Activated B cell treated with CpG ODN at 0.5 μM for 24 hours (primary cell): ENCODE measurements at regions of chr15 and their contacts with region 1.

Region 1: DNA sequence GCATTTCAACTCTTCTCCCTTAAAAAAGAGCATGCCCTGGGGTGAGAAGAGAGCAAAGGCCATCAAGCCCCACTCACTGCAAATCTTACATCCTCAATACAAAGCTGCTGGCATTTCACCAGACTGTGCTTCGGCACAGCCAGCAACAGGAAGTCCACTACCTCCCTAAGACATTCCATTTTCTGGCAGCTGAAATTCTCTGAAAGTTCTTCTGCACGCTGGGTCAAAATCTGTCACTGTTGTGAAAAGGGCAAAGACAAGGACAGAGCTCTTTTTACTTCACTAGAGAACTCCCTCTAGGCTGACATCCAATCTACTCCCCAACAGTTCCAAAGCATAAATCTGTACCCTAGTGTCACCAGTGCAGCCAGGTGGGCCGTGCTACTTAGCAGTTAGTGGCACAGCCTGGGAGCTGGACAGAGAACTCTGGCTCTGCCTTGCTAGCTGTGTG is 6.3 kb downstream of the MTMR10 start:
- DNase-seq: no peak
- ATAC-seq: peak; percentile 34
- H3K4me3 Mint-ChIP-seq: peak overlapping the region; percentile 59
- H3K27ac Mint-ChIP-seq: peak overlapping the region; percentile 83
- H3K4me1 Mint-ChIP-seq: peaks cover 75% of the 10 kb centered on the region
- H3K27me3 Mint-ChIP-seq: no peaks in the 10 kb centered on the region
- CTCF ChIP-seq: no peak

Region 2: DNA sequence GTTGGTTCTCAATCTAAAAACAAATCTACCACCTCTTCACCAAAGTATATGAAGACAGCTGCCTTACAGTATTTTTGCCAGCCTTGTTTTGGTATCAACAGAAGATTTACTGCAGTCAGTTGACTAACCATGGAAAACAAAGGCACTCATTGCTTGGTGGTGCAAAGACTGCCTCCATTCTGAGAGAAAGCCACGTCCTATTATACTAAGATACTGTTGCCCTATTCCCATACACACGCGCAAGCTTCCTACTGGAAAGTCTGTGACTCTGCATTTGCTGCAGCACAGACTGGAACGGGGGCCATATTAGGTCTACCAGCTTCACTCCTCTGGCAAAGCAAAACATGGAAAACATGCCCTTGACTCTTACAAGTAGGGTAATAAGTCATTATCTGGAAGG is 11.7 kb before region 1 on chr15:
- CTCF ChIA-PET with region 1: interaction called, 4 read pairs
- POLR2A ChIA-PET with region 1: interaction called, 6 read pairs
- intact Hi-C with region 1: loop called (anchors 2 kb)
- DNase-seq: no peak
- ATAC-seq: no peak
- H3K4me3 Mint-ChIP-seq: no peak overlapping the region
- H3K27ac Mint-ChIP-seq: no peak overlapping the region
- H3K4me1 Mint-ChIP-seq: peaks cover 67% of the 10 kb centered on the region
- H3K27me3 Mint-ChIP-seq: no peaks in the 10 kb centered on the region
- CTCF ChIP-seq: no peak

Region 3: GRCh38 chr15:31098953-31099740 is 114.0 kb after region 1 on chr15:
- CTCF ChIA-PET with region 1: no interaction called
- POLR2A ChIA-PET with region 1: no interaction called
- intact Hi-C with region 1: loop called (anchors 2 kb)
- DNase-seq: no peak
- ATAC-seq: no peak
- H3K4me3 Mint-ChIP-seq: peak overlapping the region; percentile 47
- H3K27ac Mint-ChIP-seq: peak overlapping the region; percentile 1
- H3K4me1 Mint-ChIP-seq: peaks cover 35% of the 10 kb centered on the region
- H3K27me3 Mint-ChIP-seq: no peaks in the 10 kb centered on the region
- CTCF ChIP-seq: no peak

Region 4: DNA sequence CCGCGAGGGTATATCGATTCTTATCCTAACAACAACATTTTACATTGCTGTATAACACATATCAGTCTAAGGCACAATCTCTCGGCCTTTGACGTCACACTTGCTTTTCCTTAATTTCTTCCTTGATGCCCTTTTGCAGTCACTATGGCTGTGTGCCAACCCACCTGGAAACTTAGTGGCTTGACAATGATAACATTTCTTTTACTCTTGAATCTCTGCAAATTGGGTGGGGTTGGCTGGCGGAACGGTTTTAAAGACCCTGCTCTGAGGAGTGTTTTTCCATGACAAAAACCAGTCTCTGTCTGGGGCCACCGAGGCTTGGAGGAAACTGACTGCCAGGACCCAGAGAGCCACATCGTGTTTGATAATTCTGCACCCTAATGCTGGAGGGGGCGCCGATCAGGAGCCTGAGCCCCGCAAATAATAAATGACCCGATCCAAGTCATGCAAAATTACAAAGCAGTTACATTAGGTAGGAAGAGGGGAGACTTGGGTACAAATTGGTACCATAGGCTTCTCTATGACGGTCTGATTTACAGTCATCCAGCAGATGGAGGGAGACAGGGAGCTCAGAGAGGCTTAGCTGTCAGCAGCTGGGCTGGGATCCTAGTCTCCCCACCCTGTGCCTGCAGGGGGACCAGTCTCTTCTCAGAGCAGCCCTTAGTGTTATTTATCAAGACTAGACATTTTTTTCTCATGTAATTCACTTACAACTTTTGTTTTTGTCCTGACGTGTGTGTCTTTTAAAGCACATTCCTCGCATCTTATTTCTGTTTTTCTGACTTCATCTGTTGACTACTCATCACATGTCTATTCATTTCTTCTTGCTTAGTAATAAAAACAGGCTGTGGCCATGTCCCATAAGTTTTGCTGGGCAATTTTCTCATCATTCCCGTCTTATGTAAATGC is 457.4 kb after region 1 on chr15:
- CTCF ChIA-PET with region 1: no interaction called
- POLR2A ChIA-PET with region 1: no interaction called
- intact Hi-C with region 1: no loop called
- DNase-seq: no peak
- ATAC-seq: no peak
- H3K4me3 Mint-ChIP-seq: peak overlapping the region; percentile 41
- H3K27ac Mint-ChIP-seq: peak overlapping the region; percentile 20
- H3K4me1 Mint-ChIP-seq: peaks cover 59% of the 10 kb centered on the region
- H3K27me3 Mint-ChIP-seq: no peaks in the 10 kb centered on the region
- CTCF ChIP-seq: no peak